Activated CD8-positive, alpha-beta T cell treated with anti-CD3 and anti-CD28 coated beads, Interleukin-2, amount 10 ng/mL, durations not matched to agents 7 days and 5 days (primary cell): ENCODE measurements at regions of chr6 and their contacts with region 1.

Region 1: GRCh38 chr6:142845624-142846458 is 99.1 kb downstream of the HIVEP2 start:
- DNase-seq: peak; percentile 79
- ATAC-seq: peak; percentile 57
- H3K4me3 Mint-ChIP-seq: peak overlapping the region; percentile 85
- H3K27ac Mint-ChIP-seq: peak overlapping the region; percentile 95
- H3K4me1 Mint-ChIP-seq: peaks cover 79% of the 10 kb centered on the region
- H3K27me3 Mint-ChIP-seq: no peaks in the 10 kb centered on the region

Region 2: GRCh38 chr6:142819603-142820337 is 26.1 kb before region 1 on chr6:
- CTCF ChIA-PET with region 1: interaction called, 28 read pairs
- POLR2A ChIA-PET with region 1: interaction called, 19 read pairs
- DNase-seq: peak; percentile 66
- ATAC-seq: peak; percentile 77
- H3K4me3 Mint-ChIP-seq: peak overlapping the region; percentile 85
- H3K27ac Mint-ChIP-seq: peak overlapping the region; percentile 97
- H3K4me1 Mint-ChIP-seq: peaks cover 56% of the 10 kb centered on the region
- H3K27me3 Mint-ChIP-seq: no peaks in the 10 kb centered on the region

Region 3: GRCh38 chr6:142946181-142946923 is 100.5 kb after region 1 on chr6:
- CTCF ChIA-PET with region 1: interaction called, 4 read pairs
- POLR2A ChIA-PET with region 1: interaction called, 12 read pairs
- DNase-seq: peak; percentile 88
- ATAC-seq: peak; percentile 42
- H3K4me3 Mint-ChIP-seq: peak overlapping the region; percentile 100
- H3K27ac Mint-ChIP-seq: peak overlapping the region; percentile 94
- H3K4me1 Mint-ChIP-seq: peaks cover 38% of the 10 kb centered on the region
- H3K27me3 Mint-ChIP-seq: peaks cover 3% of the 10 kb centered on the region